ENCODE measurements at regions of chr1 and their contacts with region 1.

Region 1: DNA sequence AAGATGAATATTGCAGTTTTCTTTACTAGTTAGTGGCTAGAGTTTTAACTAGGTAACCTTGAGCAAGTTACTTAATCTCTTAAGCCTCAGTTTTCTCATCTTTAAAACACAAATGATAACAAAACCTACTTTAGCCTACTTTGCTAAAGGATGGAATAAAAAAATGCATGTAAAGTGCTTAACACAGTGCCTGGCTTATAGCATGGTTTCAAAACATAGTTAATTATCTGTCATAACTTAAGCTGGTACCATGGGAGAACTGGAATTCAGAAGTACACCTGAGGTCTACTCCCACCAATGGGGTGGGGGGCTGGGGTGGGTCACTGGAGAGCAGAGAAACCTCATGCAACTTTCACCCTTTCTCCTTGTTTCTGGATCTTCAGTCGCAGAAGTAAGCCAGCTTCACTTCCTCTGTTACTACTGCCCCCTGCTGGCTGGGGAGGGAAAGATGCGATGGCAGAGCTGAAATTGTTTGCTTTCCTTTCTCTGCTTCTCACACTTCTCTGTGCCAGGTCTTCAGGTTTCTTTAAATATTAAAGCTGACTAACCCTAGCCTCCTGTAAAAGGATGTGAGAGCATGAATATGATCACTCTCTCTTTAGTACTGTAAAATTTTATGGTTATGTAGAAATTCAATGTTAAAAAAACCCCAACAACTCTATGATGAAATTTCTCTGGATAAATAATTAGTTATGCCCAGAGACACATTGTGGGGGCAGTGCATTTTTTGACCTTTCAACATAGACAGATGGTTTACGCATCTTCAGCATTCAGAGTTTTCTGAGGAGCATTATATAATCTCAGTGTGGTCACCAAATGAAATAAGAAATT is 324.2 kb downstream of the HLX start:
- DNase-seq: peak; percentile 68
- ATAC-seq: peak; percentile 66 to 69
- H3K4me3 ChIP-seq: no peak overlapping the region
- H3K27ac ChIP-seq: no peak overlapping the region
- H3K4me1 ChIP-seq: no peaks in the 10 kb centered on the region
- H3K27me3 ChIP-seq: no peaks in the 10 kb centered on the region
- CTCF ChIP-seq: peak; percentile 90

Region 2: GRCh38 chr1:220879076-220879508 is 324.3 kb before region 1 on chr1 and contains the start of gene HLX:
- intact Hi-C with region 1: loop called (anchors 10 kb)
- DNase-seq: peak; percentile 91
- ATAC-seq: peak; percentile 89 to 91
- H3K4me3 ChIP-seq: peak within 1 kb of the TSS; percentile 81
- H3K27ac ChIP-seq: peak within 1 kb of the TSS; percentile 98
- H3K4me1 ChIP-seq: peaks cover 60% of the 10 kb centered on the region
- H3K27me3 ChIP-seq: peaks cover 5% of the 10 kb centered on the region
- CTCF ChIP-seq: no peak
- total RNA-seq, gene HLX: 18.5 TPM

Region 3: DNA sequence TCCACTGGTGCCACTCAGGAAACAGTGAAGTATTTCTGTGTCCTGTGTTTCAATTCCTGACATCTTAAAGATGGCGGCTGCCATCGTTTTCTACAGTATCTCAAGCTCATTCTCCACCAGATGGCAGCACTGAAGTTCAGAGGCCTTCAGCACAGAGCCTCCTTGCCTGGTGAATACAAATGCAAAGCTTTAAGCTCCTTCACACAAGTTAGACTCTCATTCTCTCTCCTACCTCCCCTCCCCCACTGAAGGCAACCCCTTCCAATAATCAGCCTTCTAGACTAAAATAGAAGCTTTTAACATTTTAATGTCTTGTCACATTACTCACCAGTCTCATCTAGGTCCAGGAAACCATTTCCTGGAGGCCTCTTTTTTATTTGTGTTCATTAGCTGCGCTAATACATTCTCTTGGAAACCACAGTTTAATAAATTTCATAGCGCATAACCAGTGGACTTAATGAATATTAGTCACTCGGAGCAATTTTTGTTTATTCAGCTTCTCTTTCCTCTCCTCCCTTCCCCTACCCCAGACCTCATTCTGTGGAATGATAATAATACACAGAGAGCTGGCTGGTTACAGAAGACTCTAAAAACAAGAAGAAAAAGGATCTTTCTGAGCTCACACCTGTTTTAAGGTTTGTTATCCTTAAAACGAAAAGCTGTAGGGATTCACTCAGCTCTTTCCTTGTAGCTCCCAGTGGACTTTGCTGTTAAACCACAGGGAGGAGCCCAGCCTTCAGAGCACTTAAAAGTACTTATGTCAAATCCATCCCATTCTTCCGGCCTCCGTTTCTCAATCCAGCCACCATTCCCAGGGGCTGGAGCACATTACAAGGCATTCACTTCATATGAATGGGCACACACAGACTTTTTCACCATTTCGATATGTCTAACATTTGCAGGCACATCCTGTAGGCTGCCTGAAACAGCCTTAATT is 60.7 kb after region 1 on chr1:
- intact Hi-C with region 1: no loop called
- DNase-seq: no peak
- ATAC-seq: peak; percentile 80 to 85
- H3K4me3 ChIP-seq: no peak overlapping the region
- H3K27ac ChIP-seq: no peak overlapping the region
- H3K4me1 ChIP-seq: no peaks in the 10 kb centered on the region
- H3K27me3 ChIP-seq: no peaks in the 10 kb centered on the region
- CTCF ChIP-seq: peak; percentile 57